A549 (cell line): ENCODE measurements at regions of chr12 and their contacts with region 1.

Region 1: DNA sequence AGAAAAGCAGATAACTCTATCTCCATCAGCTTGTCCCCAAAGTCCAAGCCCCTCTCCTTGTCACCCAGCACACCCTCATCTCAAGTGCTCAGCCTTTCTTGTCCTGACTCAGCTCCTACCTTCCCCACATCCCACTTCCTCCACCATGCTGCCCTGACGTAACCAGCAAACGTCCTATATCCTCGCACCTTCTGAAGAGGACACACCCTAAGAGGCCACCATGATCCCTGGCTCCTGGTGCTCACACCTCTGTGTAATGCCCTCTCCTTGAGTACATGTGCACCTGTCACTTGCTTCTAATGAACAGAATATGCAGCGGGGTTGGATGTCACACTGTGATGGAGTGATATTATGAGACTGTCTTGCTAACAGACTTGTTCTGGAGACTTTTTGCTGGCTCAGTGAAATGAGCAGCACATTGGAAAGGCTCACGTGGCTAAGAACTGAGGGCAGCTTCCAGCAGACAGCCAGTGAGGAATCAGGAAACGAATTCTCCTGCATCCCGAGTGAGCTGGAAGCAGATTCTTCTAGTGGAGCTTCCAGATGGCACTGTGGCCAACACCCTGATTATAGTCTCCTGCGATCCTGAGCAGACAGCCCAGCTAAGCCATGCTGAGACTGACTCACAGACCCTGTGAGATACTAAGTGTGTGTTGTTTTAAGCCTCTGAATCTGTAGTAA is 16.3 kb upstream of the TSPAN9 start:
- DNase-seq: no peak
- ATAC-seq: peak; percentile 43 to 56; a peak in 4 of 6 replicates
- H3K4me3 ChIP-seq: no peak overlapping the region
- H3K27ac ChIP-seq: no peak overlapping the region
- H3K4me1 ChIP-seq: no peaks in the 10 kb centered on the region
- CTCF ChIP-seq: no peak
- EP300 ChIP-seq: no peak
- POLR2A ChIP-seq: no peak
- RAD21 ChIP-seq: no peak

Region 2: GRCh38 chr12:3041558-3042164 is 19.3 kb before region 1 on chr12:
- CTCF ChIA-PET with region 1: interaction called, 10 read pairs
- POLR2A ChIA-PET with region 1: no interaction called
- DNase-seq: peak; percentile 87 to 90
- ATAC-seq: peak; percentile 85 to 95
- H3K4me3 ChIP-seq: no peak overlapping the region
- H3K27ac ChIP-seq: no peak overlapping the region
- H3K4me1 ChIP-seq: no peaks in the 10 kb centered on the region
- CTCF ChIP-seq: peak; percentile 78
- EP300 ChIP-seq: no peak
- POLR2A ChIP-seq: no peak
- RAD21 ChIP-seq: peak; percentile 69 to 74